ENCODE measurements at regions of chr10 and their contacts with region 1.

Region 1: GRCh38 chr10:16795410-16796073 is 21.7 kb downstream of the RSU1 start:
- DNase-seq: no peak
- ATAC-seq: no peak
- H3K4me3 Mint-ChIP-seq: no peak overlapping the region
- H3K27ac Mint-ChIP-seq: no peak overlapping the region
- H3K4me1 Mint-ChIP-seq: peaks cover 7% of the 10 kb centered on the region
- H3K27me3 Mint-ChIP-seq: no peaks in the 10 kb centered on the region

Region 2: GRCh38 chr10:16724509-16724908 is 71.0 kb before region 1 on chr10:
- CTCF ChIA-PET with region 1: no interaction called
- POLR2A ChIA-PET with region 1: no interaction called
- DNase-seq: no peak
- ATAC-seq: no peak
- H3K4me3 Mint-ChIP-seq: no peak overlapping the region
- H3K27ac Mint-ChIP-seq: no peak overlapping the region
- H3K4me1 Mint-ChIP-seq: peaks cover 26% of the 10 kb centered on the region
- H3K27me3 Mint-ChIP-seq: no peaks in the 10 kb centered on the region

Region 3: GRCh38 chr10:16811765-16812164 is 16.2 kb after region 1 on chr10:
- CTCF ChIA-PET with region 1: interaction called, 13 read pairs
- POLR2A ChIA-PET with region 1: no interaction called
- DNase-seq: no peak
- ATAC-seq: no peak
- H3K4me3 Mint-ChIP-seq: no peak overlapping the region
- H3K27ac Mint-ChIP-seq: no peak overlapping the region
- H3K4me1 Mint-ChIP-seq: peaks cover 20% of the 10 kb centered on the region
- H3K27me3 Mint-ChIP-seq: no peaks in the 10 kb centered on the region

Measured in activated CD8-positive, alpha-beta T cell treated with anti-CD3 and anti-CD28 coated beads, Interleukin-2, amount 10 ng/mL, durations not matched to agents 7 days and 5 days (primary cell).